BJ (cell line): ENCODE measurements at regions of chr4 and their contacts with region 1.

Region 1: GRCh38 chr4:48546336-48546735 is 56.3 kb downstream of the ZAR1 start:
- DNase-seq: no peak
- H3K4me3 ChIP-seq: no peak overlapping the region
- H3K27me3 ChIP-seq: no peaks in the 10 kb centered on the region
- CTCF ChIP-seq: peak; percentile 75

Region 2: DNA sequence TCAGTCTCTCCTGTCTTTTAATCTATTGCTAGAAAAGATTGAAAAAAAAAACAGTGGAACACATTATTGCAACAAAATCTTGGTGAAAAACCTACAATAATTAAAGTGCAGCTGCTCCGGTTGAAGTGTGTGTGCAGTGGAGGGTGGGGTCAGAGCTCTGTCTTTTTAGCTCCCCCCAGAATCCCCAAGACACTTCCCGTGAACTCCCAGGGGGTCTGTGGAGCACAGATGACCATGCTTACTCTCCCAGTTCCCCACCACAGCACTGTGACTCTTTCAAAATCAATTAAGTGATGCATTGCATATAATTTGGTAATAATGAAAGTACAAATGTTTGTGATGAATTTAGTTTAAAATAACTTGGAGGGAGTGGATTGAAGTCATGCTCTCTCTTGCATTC is 78.9 kb before region 1 on chr4:
- CTCF ChIA-PET with region 1: interaction called, 10 read pairs
- POLR2A ChIA-PET with region 1: no interaction called
- DNase-seq: no peak
- H3K4me3 ChIP-seq: no peak overlapping the region
- H3K27me3 ChIP-seq: peaks cover 9% of the 10 kb centered on the region
- CTCF ChIP-seq: no peak

Region 3: GRCh38 chr4:48526406-48526805 is 19.9 kb before region 1 on chr4:
- CTCF ChIA-PET with region 1: interaction called, 15 read pairs
- POLR2A ChIA-PET with region 1: no interaction called
- DNase-seq: no peak
- H3K4me3 ChIP-seq: no peak overlapping the region
- H3K27me3 ChIP-seq: no peaks in the 10 kb centered on the region
- CTCF ChIP-seq: no peak

Region 4: GRCh38 chr4:48557478-48557877 is 11.1 kb after region 1 on chr4:
- CTCF ChIA-PET with region 1: interaction called, 11 read pairs
- POLR2A ChIA-PET with region 1: no interaction called
- DNase-seq: no peak
- H3K4me3 ChIP-seq: no peak overlapping the region
- H3K27me3 ChIP-seq: no peaks in the 10 kb centered on the region
- CTCF ChIP-seq: peak; percentile 32; the same call in 1 of the 2 replicates